ENCODE measurements at regions of chr11 and their contacts with region 1.

Region 1: GRCh38 chr11:59135648-59136461 is 6.8 kb upstream of the FAM111A start:
- DNase-seq: peak; percentile 73
- H3K4me3 Mint-ChIP-seq: no peak overlapping the region
- H3K27ac Mint-ChIP-seq: peak overlapping the region; percentile 24
- H3K4me1 Mint-ChIP-seq: peaks cover 6% of the 10 kb centered on the region
- H3K27me3 Mint-ChIP-seq: no peaks in the 10 kb centered on the region
- CTCF ChIP-seq: peak; percentile 98

Region 2: GRCh38 chr11:58675334-58676155 is 460.3 kb before region 1 on chr11:
- CTCF ChIA-PET with region 1: interaction called, 3 read pairs
- POLR2A ChIA-PET with region 1: no interaction called
- intact Hi-C with region 1: loop called (anchors 5 kb)
- DNase-seq: peak; percentile 63
- H3K4me3 Mint-ChIP-seq: no peak overlapping the region
- H3K27ac Mint-ChIP-seq: no peak overlapping the region
- H3K4me1 Mint-ChIP-seq: no peaks in the 10 kb centered on the region
- H3K27me3 Mint-ChIP-seq: no peaks in the 10 kb centered on the region
- CTCF ChIP-seq: peak; percentile 83

Region 3: GRCh38 chr11:58999291-58999680 is 136.6 kb before region 1 on chr11:
- CTCF ChIA-PET with region 1: no interaction called
- POLR2A ChIA-PET with region 1: no interaction called
- intact Hi-C with region 1: no loop called
- DNase-seq: no peak
- H3K4me3 Mint-ChIP-seq: no peak overlapping the region
- H3K27ac Mint-ChIP-seq: no peak overlapping the region
- H3K4me1 Mint-ChIP-seq: no peaks in the 10 kb centered on the region
- H3K27me3 Mint-ChIP-seq: peaks cover 36% of the 10 kb centered on the region
- CTCF ChIP-seq: no peak

Region 4: DNA sequence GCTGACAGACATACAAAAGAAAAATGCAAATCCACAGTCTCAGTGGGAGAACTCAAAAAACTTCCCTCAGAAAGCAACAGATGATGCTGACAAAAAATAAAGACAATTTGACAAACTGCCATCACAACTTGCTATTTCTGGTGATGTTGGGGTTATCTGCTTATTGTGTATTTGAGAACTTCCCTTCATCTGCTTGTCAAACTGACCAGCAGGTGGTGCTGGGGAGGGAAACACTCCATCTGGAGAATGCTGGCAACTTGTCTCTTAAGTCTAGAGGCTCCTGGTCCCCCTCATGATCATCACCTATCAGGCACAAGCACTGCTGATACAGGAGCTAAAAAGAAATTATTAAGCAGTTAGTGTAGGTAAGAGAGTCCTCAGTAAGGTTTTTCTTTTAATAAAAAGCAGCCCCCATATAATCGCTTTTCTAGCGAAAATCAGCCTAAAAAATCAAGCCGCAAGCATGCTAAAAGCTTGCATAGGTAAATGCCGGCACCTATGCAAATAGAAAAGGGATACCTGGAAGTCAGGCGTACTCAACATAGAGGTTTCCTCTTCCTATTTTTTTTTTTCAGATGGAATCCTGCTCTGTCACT is 38.6 kb before region 1 on chr11:
- CTCF ChIA-PET with region 1: interaction called, 36 read pairs
- POLR2A ChIA-PET with region 1: no interaction called
- intact Hi-C with region 1: loop called (anchors 1 kb)
- DNase-seq: peak; percentile 72
- H3K4me3 Mint-ChIP-seq: no peak overlapping the region
- H3K27ac Mint-ChIP-seq: no peak overlapping the region
- H3K4me1 Mint-ChIP-seq: no peaks in the 10 kb centered on the region
- H3K27me3 Mint-ChIP-seq: peaks cover 32% of the 10 kb centered on the region
- CTCF ChIP-seq: peak; percentile 71

Region 5: GRCh38 chr11:59119826-59120225 is 16.0 kb before region 1 on chr11:
- CTCF ChIA-PET with region 1: interaction called, 28 read pairs
- POLR2A ChIA-PET with region 1: interaction called, 3 read pairs
- intact Hi-C with region 1: no loop called
- DNase-seq: no peak
- H3K4me3 Mint-ChIP-seq: no peak overlapping the region
- H3K27ac Mint-ChIP-seq: no peak overlapping the region
- H3K4me1 Mint-ChIP-seq: no peaks in the 10 kb centered on the region
- H3K27me3 Mint-ChIP-seq: no peaks in the 10 kb centered on the region
- CTCF ChIP-seq: no peak

Region 6: DNA sequence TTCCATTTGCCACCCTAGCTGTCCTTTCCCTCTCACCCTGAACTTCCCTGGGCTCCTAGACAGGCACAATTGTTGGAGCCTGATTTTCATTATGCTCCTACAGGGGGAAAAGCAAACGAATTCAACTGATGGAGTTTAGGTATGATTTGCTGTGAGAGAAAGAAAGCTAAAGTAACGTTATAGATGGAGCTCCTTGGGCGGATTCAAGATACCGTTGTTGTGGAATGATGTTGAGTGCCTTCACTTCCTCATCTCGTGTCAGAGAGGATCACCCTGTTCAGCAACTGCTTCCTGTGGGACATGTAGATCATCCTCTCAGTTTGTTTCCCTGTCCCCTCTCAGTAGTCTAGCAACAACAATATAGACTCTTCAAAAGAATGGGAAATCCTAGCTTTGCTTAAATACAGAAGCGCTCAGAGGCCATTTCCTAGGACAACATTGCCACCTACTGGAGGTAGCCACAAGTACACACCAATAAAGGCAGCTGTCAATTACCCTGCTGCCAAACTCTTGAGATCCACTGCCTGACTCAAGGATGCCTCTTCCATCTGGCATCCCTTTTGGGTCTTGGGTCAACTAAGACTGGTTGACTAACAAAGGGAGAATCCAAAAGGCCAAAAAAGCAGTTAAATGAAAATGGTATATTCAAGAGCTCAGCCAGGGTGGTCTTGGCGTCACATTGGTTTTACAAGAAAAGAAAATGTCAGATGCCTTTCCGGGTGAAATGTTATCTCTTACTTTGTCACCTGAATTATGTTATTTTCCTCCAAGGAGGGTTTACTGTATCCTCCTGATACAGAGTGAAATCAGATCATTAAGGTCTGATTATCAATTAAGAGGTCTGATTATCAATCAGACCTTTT is 22.6 kb after region 1 on chr11:
- CTCF ChIA-PET with region 1: interaction called, 146 read pairs
- POLR2A ChIA-PET with region 1: interaction called, 4 read pairs
- intact Hi-C with region 1: no loop called
- DNase-seq: peak; percentile 78
- H3K4me3 Mint-ChIP-seq: no peak overlapping the region
- H3K27ac Mint-ChIP-seq: no peak overlapping the region
- H3K4me1 Mint-ChIP-seq: no peaks in the 10 kb centered on the region
- H3K27me3 Mint-ChIP-seq: peaks cover 17% of the 10 kb centered on the region
- CTCF ChIP-seq: peak; percentile 76